CD4-positive, alpha-beta T cell (primary cell): ENCODE measurements at regions of chr12 and their contacts with region 1.

Region 1: DNA sequence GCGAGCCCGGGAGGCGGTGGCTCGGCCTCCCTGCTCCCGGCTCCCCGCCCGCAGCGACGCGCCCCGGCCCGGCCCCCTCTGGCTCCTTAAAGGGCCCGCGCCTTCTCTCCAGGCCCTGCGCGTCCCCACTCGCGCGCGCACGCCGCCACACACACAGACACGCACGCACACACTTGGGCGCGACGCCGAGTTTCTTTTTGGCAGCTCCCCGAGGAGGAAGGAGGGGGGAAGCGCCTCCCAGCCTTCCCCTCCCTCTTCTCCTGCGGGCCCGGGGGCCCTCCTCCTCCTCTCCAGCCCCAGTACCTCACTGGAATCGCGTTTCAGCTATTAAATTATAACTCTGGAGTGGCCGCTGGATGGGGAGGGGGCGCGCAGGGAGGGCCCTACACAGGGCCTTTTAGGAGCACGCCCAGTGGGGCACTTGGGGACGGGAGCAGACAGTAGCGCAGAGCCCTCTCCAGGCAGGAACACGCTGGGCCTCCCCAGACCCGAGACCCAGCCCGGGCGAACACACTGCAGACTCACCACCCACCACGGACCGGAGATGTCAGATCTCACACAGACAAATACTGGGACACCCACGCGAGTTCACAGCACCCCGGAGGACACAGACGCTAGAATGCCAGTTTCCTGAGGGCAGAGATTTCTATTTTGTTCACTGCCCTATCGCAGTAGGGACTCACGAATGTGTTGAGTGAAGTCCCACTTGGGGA is 405 bp upstream of the NCOR2 start:
- DNase-seq: peak; percentile 68 to 94 (median 83)
- ATAC-seq: peak; percentile 71
- H3K4me3 ChIP-seq: peak overlapping the region; percentile 72
- H3K4me3 Mint-ChIP-seq: peak overlapping the region; percentile 95
- H3K27ac ChIP-seq: peak overlapping the region in 1 of 2 donors; percentile 35
- H3K27ac Mint-ChIP-seq: peak overlapping the region; percentile 87
- H3K4me1 ChIP-seq: peaks cover 51% of the 10 kb centered on the region
- H3K4me1 Mint-ChIP-seq: peaks cover 40% of the 10 kb centered on the region
- H3K27me3 ChIP-seq: no peaks in the 10 kb centered on the region
- H3K27me3 Mint-ChIP-seq: no peaks in the 10 kb centered on the region
- CTCF ChIP-seq: no peak

Region 2: DNA sequence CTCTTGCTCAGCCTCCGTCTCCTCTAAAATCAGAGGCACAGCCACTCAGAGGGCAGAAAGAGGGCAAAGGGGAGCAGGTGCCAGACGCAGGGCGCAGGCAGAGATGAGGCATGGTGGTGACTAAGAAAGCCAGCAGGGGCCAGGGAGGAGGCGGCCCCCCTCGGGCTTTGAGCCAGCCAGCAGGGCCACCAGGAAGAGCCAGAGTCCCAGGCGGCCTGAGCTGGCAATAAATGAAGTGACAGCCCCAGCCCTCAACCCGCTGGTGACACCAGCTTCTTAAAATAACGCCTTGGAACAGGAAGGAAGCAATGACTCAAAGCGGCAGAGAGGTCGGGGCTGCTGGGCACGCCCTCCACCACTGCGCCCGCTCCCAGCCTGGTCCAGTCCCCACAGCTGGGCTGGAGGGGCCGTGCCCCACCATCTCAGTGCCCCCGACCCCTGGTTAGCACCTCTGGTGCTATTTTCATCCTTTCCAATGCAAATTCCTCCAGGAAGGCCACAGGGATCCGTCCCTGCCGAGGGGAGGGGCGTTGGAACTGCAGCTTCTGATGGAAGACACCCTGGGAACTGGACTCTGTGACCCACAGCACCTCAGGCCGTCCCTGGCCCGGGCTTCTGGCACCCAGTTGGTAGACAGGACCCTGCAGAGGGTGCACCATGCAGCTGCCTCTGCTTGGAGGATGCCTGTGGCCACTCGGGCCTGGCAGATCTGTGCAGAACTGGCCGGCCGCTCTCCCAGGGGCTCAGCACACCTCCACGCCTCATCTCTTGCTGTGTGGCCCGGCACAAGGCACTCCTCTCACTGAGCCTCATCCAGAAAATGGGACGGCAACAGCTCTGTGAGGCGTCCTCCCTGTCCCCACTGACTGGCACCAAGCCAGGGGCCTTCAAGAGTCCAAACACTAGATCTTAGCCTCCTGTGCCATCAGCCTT is 114.1 kb before region 1 on chr12:
- CTCF ChIA-PET with region 1: interaction called, 3 read pairs
- POLR2A ChIA-PET with region 1: interaction called, 4 read pairs
- intact Hi-C with region 1: loop called in 1 of 2 experiments (anchors 10 kb)
- DNase-seq: peak; percentile 53 to 93 (median 77)
- ATAC-seq: peak; percentile 78
- H3K4me3 ChIP-seq: peak overlapping the region; percentile 43
- H3K4me3 Mint-ChIP-seq: peak overlapping the region; percentile 80
- H3K27ac ChIP-seq: peak overlapping the region; percentile 68 to 74
- H3K27ac Mint-ChIP-seq: peak overlapping the region; percentile 78
- H3K4me1 ChIP-seq: peaks cover 91% of the 10 kb centered on the region
- H3K4me1 Mint-ChIP-seq: peaks cover 69% of the 10 kb centered on the region
- H3K27me3 ChIP-seq: no peaks in the 10 kb centered on the region
- H3K27me3 Mint-ChIP-seq: no peaks in the 10 kb centered on the region
- CTCF ChIP-seq: no peak

Region 3: DNA sequence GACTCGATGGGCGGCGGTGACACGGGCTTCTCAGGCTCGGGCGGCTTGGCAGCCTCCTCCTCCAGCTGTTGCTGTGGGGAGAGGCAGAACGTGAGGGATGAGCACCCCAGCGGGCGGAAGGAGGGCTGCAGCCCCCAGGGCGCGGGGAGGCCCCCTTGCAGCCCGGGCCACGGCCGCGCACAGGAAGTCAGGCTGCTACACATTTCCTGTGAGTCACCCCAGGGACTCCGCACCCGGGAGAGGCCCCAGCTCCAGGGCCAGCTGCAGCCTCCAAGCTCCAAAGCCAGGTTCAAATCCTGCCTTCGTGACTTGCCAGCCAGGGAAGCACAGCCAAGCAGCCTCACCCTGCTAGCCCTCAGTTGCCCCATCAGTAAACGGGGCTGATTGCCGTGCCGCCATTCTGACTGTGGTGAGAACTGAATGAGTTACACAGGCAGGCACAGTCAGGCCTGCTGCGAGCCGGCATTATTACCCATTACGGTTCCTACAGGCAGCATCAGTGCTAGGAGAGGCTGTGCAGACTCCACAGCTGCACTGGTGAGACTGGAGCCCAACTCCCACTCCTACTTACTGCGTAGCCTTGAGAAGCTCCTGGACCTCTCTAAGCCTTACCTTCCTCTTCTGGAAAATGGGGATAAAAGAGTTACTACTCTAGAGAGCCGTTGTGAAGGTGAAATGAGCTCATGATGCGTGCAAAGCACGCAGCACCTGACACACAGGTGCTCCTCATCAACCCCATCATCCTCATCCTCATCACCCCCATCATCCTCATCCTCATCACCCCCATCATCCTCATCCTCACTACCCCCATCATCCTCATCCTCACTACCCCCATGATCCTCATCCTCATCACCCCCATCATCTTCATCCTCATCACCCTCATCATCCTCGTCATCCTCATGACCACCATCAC is 101.3 kb before region 1 on chr12:
- CTCF ChIA-PET with region 1: interaction called, 4 read pairs
- POLR2A ChIA-PET with region 1: no interaction called
- intact Hi-C with region 1: loop called in 1 of 2 experiments (anchors 5 kb)
- DNase-seq: peak; percentile 78 to 96 (median 86)
- ATAC-seq: peak; percentile 92
- H3K4me3 ChIP-seq: peak overlapping the region; percentile 52
- H3K4me3 Mint-ChIP-seq: peak overlapping the region; percentile 74
- H3K27ac ChIP-seq: peak overlapping the region; percentile 74 to 82
- H3K27ac Mint-ChIP-seq: peak overlapping the region; percentile 91
- H3K4me1 ChIP-seq: peaks cover 50% of the 10 kb centered on the region
- H3K4me1 Mint-ChIP-seq: peaks cover 59% of the 10 kb centered on the region
- H3K27me3 ChIP-seq: no peaks in the 10 kb centered on the region
- H3K27me3 Mint-ChIP-seq: no peaks in the 10 kb centered on the region
- CTCF ChIP-seq: peak; percentile 57

Region 4: GRCh38 chr12:124609041-124609995 is 41.5 kb after region 1 on chr12:
- CTCF ChIA-PET with region 1: no interaction called
- POLR2A ChIA-PET with region 1: interaction called, 8 read pairs
- intact Hi-C with region 1: loop called (anchors 1 to 2 kb)
- DNase-seq: peak; percentile 79 to 95 (median 90)
- ATAC-seq: peak; percentile 93
- H3K4me3 ChIP-seq: peak overlapping the region; percentile 37
- H3K4me3 Mint-ChIP-seq: peak overlapping the region; percentile 76
- H3K27ac ChIP-seq: no peak overlapping the region
- H3K27ac Mint-ChIP-seq: peak overlapping the region; percentile 60
- H3K4me1 ChIP-seq: peaks cover 37% of the 10 kb centered on the region
- H3K4me1 Mint-ChIP-seq: peaks cover 46% of the 10 kb centered on the region
- H3K27me3 ChIP-seq: no peaks in the 10 kb centered on the region
- H3K27me3 Mint-ChIP-seq: no peaks in the 10 kb centered on the region
- CTCF ChIP-seq: peak; percentile 26

Region 5: GRCh38 chr12:124745891-124746570 is 178.2 kb after region 1 on chr12:
- CTCF ChIA-PET with region 1: no interaction called
- POLR2A ChIA-PET with region 1: no interaction called
- intact Hi-C with region 1: no loop called
- DNase-seq: peak in 4 of 14 experiments; percentile 9 to 50 (median 32)
- ATAC-seq: peak; percentile 68
- H3K4me3 ChIP-seq: no peak overlapping the region
- H3K4me3 Mint-ChIP-seq: peak overlapping the region; percentile 54
- H3K27ac ChIP-seq: no peak overlapping the region
- H3K27ac Mint-ChIP-seq: no peak overlapping the region
- H3K4me1 ChIP-seq: peaks cover 6% of the 10 kb centered on the region
- H3K4me1 Mint-ChIP-seq: peaks cover 12% of the 10 kb centered on the region
- H3K27me3 ChIP-seq: peaks cover 0 to 1% of the 10 kb centered on the region in 2 experiments
- H3K27me3 Mint-ChIP-seq: peaks cover 12% of the 10 kb centered on the region
- CTCF ChIP-seq: no peak